T-cell (primary cell): ENCODE measurements at regions of chr2 and their contacts with region 1.

Region 1: GRCh38 chr2:196143730-196144131 is 27.6 kb downstream of the STK17B start:
- DNase-seq: no peak
- ATAC-seq: no peak
- H3K4me3 ChIP-seq: no peak overlapping the region
- H3K4me3 Mint-ChIP-seq: peak overlapping the region in 2 of 3 donors; percentile 24 to 71
- H3K27ac ChIP-seq: peak overlapping the region; percentile 28
- H3K27ac Mint-ChIP-seq: peak overlapping the region; percentile 74 to 87
- H3K4me1 ChIP-seq: peaks cover 44 to 46% of the 10 kb centered on the region in 2 experiments
- H3K4me1 Mint-ChIP-seq: peaks cover 72 to 78% (median 72%) of the 10 kb centered on the region in 3 donors
- H3K27me3 ChIP-seq: no peaks in the 10 kb centered on the region
- H3K27me3 Mint-ChIP-seq: no peaks in the 10 kb centered on the region

Region 2: DNA sequence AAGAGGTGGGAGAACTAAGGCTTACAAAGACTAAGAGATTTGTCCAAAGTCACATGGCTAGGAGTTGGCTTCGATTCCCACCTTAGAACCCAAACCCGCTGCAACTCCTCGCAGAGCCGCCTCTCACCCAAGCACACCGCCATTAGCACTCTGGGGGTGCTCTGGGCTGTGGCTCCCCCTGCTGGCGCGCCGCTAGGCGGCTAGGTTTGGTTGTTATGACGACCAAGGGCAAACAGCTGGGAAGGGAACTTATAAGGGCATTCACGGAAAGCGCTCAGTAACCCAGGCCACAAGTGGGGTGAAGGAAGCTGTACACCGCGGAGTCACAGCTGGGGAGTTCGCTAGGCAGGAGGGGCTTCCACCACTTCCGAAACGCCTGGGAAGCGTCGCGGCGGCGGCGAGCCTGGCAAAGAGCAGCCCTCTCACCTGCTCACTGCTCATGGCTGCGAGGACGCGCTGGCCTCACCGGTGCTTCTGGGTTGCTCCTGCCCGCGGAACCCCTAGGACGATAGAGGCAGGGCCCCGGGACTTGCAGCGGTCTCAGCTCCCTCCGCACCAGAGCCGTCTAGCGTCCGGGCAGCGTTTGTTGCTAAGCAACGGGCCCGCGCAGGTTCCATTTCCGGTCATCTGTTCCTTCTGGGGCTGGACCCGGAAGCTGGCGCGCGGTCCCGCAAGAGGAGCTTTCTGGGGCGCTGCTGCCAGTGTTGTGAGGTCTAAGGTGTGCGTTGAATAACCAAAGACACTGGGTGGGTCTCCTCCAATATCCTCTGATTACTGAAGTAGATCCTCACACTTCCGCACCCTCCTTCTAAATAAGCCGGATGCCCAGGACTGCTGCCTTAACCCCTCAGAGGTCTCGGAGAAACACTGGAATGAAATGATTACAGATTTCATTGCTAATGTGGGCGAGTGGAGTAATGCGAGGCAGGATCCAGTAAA is 75.2 kb before region 1 on chr2 and contains the start of gene DNAH7:
- CTCF ChIA-PET with region 1: interaction called, 3 to 11 read pairs
- POLR2A ChIA-PET with region 1: interaction called in 1 of 2 experiments, 5 read pairs
- DNase-seq: peak; percentile 80 to 94 (median 92)
- ATAC-seq: peak; percentile 89 to 97 (median 93)
- H3K4me3 ChIP-seq: peak within 1 kb of the TSS; percentile 60 to 64
- H3K4me3 Mint-ChIP-seq: peak within 1 kb of the TSS; percentile 81 to 85 (median 82)
- H3K27ac ChIP-seq: peak within 1 kb of the TSS; percentile 51
- H3K27ac Mint-ChIP-seq: peak within 1 kb of the TSS; percentile 71 to 79
- H3K4me1 ChIP-seq: peaks cover 0 to 14% of the 10 kb centered on the region in 2 experiments
- H3K4me1 Mint-ChIP-seq: peaks cover 13 to 16% (median 14%) of the 10 kb centered on the region in 3 donors
- H3K27me3 ChIP-seq: peaks cover 0 to 4% of the 10 kb centered on the region in 2 experiments
- H3K27me3 Mint-ChIP-seq: peaks cover 0 to 4% of the 10 kb centered on the region in 2 donors
- total RNA-seq, gene DNAH7: 0.03 TPM in 1 of 5 donors, not detected in the others

Region 3: DNA sequence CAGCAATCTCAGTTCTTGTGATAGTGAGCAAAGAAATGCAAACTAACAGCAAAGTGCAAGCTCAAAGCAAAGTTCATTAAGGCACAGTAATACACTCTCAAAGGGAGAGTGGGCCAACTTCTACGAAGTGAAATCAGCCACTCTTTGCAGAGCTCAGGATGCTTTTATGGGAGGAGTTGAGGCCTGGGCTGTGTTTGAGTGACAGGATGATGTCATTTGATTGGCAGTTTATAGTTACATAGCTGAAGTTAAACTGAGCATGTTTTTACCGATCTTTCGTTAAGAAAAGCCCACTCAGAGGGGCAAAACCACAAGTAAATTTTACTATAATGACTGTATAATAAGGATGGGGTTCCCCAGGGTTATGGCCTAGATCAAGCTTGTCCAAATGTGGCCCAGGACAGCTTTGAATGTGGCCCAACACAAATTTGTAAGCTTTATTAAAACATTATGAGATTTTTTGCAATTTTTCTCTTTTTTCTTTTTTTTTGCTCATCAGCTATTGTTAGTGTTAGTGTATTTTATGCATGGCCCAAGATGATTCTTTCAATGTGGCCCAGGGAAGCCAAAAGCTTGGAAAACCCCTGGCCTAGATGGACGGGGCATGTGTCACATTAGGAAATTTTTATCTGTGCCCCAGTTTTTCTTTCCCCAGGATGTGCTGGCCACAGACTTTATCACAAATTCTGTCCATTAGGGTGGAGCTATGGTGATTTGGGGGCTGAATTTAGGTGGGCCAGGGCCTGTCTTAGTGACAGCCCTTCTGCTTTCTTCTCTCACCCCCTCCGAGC is 66.8 kb before region 1 on chr2:
- CTCF ChIA-PET with region 1: interaction called in 1 of 2 experiments, 11 read pairs
- POLR2A ChIA-PET with region 1: interaction called, 4 to 6 read pairs
- DNase-seq: no peak
- ATAC-seq: no peak
- H3K4me3 ChIP-seq: no peak overlapping the region
- H3K4me3 Mint-ChIP-seq: no peak overlapping the region
- H3K27ac ChIP-seq: no peak overlapping the region
- H3K27ac Mint-ChIP-seq: no peak overlapping the region
- H3K4me1 ChIP-seq: peaks cover 0 to 4% of the 10 kb centered on the region in 2 experiments
- H3K4me1 Mint-ChIP-seq: peaks cover 24 to 28% (median 27%) of the 10 kb centered on the region in 3 donors
- H3K27me3 ChIP-seq: no peaks in the 10 kb centered on the region
- H3K27me3 Mint-ChIP-seq: no peaks in the 10 kb centered on the region

Region 4: DNA sequence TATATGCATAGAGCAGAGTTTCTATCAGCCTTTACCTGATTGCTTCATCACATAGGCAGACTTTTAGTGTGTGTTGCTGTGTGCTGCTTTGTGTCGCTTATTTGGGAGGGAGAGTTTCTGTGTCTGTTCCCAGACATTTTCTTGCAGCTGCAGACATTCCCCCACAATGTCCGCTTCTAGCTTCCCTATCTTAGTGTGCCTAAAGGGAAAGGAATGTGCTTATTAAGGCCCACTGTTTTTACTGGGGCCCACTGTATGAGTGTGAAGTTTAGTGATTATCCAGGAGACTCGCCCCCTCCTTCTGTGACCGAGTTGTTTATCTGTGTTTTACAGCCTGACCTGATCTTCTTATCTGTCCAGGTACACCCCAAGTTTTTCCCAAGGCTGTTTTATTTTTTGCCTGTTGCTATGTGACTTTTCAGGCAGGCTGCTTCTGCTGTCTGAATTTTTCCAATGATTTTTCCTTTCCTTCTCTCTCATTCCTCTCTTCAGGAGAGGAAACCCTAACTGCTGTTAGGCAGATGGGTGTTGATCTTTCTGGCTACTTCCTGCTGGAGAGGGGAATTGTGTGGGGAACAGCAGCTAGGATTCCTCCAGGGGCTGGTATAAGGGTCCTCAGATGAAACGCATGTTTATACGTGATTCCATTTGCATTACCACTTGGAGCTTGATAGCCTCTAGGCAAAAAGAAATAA is 19.9 kb before region 1 on chr2:
- CTCF ChIA-PET with region 1: no interaction called
- POLR2A ChIA-PET with region 1: no interaction called
- DNase-seq: no peak
- ATAC-seq: no peak
- H3K4me3 ChIP-seq: no peak overlapping the region
- H3K4me3 Mint-ChIP-seq: no peak overlapping the region
- H3K27ac ChIP-seq: no peak overlapping the region
- H3K27ac Mint-ChIP-seq: no peak overlapping the region
- H3K4me1 ChIP-seq: no peaks in the 10 kb centered on the region
- H3K4me1 Mint-ChIP-seq: peaks cover 0 to 2% (median 0%) of the 10 kb centered on the region in 3 donors
- H3K27me3 ChIP-seq: no peaks in the 10 kb centered on the region
- H3K27me3 Mint-ChIP-seq: no peaks in the 10 kb centered on the region

Region 5: GRCh38 chr2:196331143-196331542 is 187.4 kb after region 1 on chr2:
- CTCF ChIA-PET with region 1: no interaction called
- POLR2A ChIA-PET with region 1: interaction called in 1 of 2 experiments, 19 read pairs
- DNase-seq: no peak
- ATAC-seq: no peak
- H3K4me3 ChIP-seq: no peak overlapping the region
- H3K4me3 Mint-ChIP-seq: no peak overlapping the region
- H3K27ac ChIP-seq: no peak overlapping the region
- H3K27ac Mint-ChIP-seq: no peak overlapping the region
- H3K4me1 ChIP-seq: no peaks in the 10 kb centered on the region
- H3K4me1 Mint-ChIP-seq: peaks cover 0 to 6% (median 0%) of the 10 kb centered on the region in 3 donors
- H3K27me3 ChIP-seq: no peaks in the 10 kb centered on the region
- H3K27me3 Mint-ChIP-seq: peaks cover under 1 to 5% of the 10 kb centered on the region in 2 donors

Region 6: DNA sequence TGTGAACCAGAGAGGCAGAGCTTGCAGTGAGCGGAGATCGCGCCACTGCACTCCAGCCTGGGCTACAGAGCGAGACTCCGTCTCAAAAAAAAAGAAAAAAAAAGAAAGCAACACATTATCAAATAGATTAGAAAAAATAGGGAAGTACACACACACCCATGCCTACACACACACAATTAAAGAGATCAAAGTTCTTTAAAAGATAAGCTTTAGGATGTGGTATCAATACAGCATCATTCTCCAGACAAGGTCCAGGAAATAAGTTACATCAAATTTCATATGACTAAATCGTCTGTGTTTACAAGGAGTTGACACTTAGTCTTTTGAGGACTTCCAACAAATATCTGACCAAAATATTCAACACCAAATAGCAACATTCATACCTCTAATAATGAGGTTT is 757.1 kb after region 1 on chr2:
- CTCF ChIA-PET with region 1: interaction called in 1 of 2 experiments, 11 read pairs
- POLR2A ChIA-PET with region 1: no interaction called
- DNase-seq: no peak
- ATAC-seq: no peak
- H3K4me3 ChIP-seq: no peak overlapping the region
- H3K4me3 Mint-ChIP-seq: no peak overlapping the region
- H3K27ac ChIP-seq: no peak overlapping the region
- H3K27ac Mint-ChIP-seq: no peak overlapping the region
- H3K4me1 ChIP-seq: no peaks in the 10 kb centered on the region
- H3K4me1 Mint-ChIP-seq: peaks cover 0 to 6% (median 2%) of the 10 kb centered on the region in 3 donors
- H3K27me3 ChIP-seq: no peaks in the 10 kb centered on the region
- H3K27me3 Mint-ChIP-seq: no peaks in the 10 kb centered on the region

Region 7: GRCh38 chr2:196987649-196988364 is 844.1 kb after region 1 on chr2:
- CTCF ChIA-PET with region 1: no interaction called
- POLR2A ChIA-PET with region 1: interaction called in 1 of 2 experiments, 10 read pairs
- DNase-seq: no peak
- ATAC-seq: peak in 3 of 4 experiments; percentile 51 to 60 (median 56)
- H3K4me3 ChIP-seq: no peak overlapping the region
- H3K4me3 Mint-ChIP-seq: no peak overlapping the region
- H3K27ac ChIP-seq: peak overlapping the region; percentile 41
- H3K27ac Mint-ChIP-seq: peak overlapping the region; percentile 81 to 93
- H3K4me1 ChIP-seq: peaks cover 2 to 5% of the 10 kb centered on the region in 2 experiments
- H3K4me1 Mint-ChIP-seq: peaks cover 40 to 50% (median 44%) of the 10 kb centered on the region in 3 donors
- H3K27me3 ChIP-seq: no peaks in the 10 kb centered on the region
- H3K27me3 Mint-ChIP-seq: no peaks in the 10 kb centered on the region